Left ventricle myocardium inferior (tissue), 1 donor: ENCODE measurements at regions of chr1 and their contacts with region 1.

Region 1: GRCh38 chr1:78607334-78607927 is 12.8 kb upstream of the IFI44L start:
- DNase-seq: no peak
- H3K4me3 ChIP-seq: no peak overlapping the region
- H3K27ac ChIP-seq: no peak overlapping the region
- H3K4me1 ChIP-seq: no peaks in the 10 kb centered on the region
- H3K27me3 ChIP-seq: peaks cover 9% of the 10 kb centered on the region
- CTCF ChIP-seq: peak; percentile 60

Region 2: GRCh38 chr1:78136680-78137079 is 470.8 kb before region 1 on chr1:
- intact Hi-C with region 1: loop called (anchors 5 kb)
- DNase-seq: no peak
- H3K4me3 ChIP-seq: no peak overlapping the region
- H3K27ac ChIP-seq: no peak overlapping the region
- H3K4me1 ChIP-seq: no peaks in the 10 kb centered on the region
- H3K27me3 ChIP-seq: no peaks in the 10 kb centered on the region
- CTCF ChIP-seq: no peak